ENCODE measurements at regions of chr1 and their contacts with region 1.

Region 1: DNA sequence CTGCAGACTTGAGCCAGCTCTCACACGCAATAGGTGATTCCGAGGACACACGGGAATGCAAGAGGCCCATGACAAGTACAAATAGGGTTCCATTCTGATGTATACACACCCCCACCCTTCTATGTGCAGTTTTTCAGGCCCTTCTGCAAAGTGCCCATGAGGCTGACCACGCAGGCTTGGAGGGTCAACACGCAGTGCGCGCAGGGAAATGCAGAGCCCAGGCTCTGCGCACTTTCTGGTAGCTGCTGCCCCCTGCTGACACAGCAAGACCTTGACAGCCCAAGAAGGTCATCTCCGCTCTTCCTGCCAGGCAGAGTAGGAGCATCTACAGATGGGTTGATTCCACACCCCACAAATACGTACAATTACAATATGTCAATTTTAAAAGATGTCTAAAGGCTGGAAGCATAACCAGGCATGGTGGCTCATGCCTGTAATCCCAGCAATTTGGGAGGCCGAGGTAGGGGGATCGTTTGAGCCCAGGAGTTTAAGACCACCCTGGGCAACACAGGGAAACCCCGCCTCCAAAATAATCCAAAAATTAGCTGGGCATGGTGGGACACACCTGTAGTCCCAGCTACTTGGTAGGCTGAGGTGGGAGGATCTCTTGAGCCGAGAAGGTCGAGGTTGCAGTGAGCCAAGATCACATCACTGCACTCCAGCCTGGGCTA is 18.5 kb downstream of the SH3BP5L start:
- DNase-seq: peak; percentile 50
- H3K4me3 Mint-ChIP-seq: no peak overlapping the region
- H3K27ac Mint-ChIP-seq: no peak overlapping the region
- H3K4me1 Mint-ChIP-seq: no peaks in the 10 kb centered on the region
- H3K27me3 Mint-ChIP-seq: no peaks in the 10 kb centered on the region
- CTCF ChIP-seq: peak; percentile 70

Region 2: GRCh38 chr1:248622570-248623001 is 184.6 kb before region 1 on chr1:
- CTCF ChIA-PET with region 1: no interaction called
- intact Hi-C with region 1: loop called (anchors 1 kb)
- DNase-seq: peak; percentile 21
- H3K4me3 Mint-ChIP-seq: no peak overlapping the region
- H3K27ac Mint-ChIP-seq: no peak overlapping the region
- H3K4me1 Mint-ChIP-seq: no peaks in the 10 kb centered on the region
- H3K27me3 Mint-ChIP-seq: no peaks in the 10 kb centered on the region
- CTCF ChIP-seq: no peak

Region 3: DNA sequence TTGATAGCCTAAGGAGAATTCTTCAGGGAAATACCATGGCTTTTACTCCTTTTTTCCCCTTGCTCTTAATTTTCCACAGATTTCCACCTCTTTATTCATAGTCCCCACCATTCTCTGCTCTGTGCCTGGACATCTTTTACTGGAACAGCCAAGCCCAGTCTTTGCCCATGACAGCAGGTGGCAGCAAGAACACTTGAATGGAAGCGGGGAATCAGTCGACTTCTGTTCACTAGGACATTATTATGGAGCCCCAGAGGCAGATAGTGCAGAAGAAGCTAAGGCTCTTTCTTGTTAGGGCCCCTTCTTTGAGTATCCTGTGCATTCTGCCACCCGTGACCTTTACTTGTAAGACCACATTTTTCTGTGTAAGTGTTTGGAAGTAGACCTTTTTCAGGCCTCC is 110.9 kb before region 1 on chr1:
- CTCF ChIA-PET with region 1: interaction called, 4 read pairs
- intact Hi-C with region 1: loop called (anchors 2 kb)
- DNase-seq: peak; percentile 43
- H3K4me3 Mint-ChIP-seq: no peak overlapping the region
- H3K27ac Mint-ChIP-seq: no peak overlapping the region
- H3K4me1 Mint-ChIP-seq: no peaks in the 10 kb centered on the region
- H3K27me3 Mint-ChIP-seq: no peaks in the 10 kb centered on the region
- CTCF ChIP-seq: no peak

Region 4: DNA sequence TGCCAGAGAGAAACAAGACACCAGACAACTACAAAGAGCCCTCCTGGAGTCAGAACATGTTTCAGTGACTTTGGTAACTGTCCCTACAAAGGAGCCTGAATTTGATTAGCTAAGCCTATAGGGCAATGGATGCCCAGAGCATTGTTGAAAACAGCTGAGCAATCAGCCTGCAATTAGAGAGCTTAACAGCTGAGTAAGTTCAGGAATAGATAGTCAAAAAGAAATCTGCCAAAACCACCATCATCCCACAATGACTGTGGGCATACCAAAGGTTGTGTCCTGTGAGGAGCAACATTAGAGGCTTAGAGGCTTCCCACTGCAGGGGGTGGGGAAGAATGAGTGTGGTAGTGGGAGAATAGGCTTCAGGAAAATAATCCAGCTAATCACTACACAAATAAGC is 13.6 kb before region 1 on chr1:
- CTCF ChIA-PET with region 1: no interaction called
- intact Hi-C with region 1: no loop called
- DNase-seq: no peak
- H3K4me3 Mint-ChIP-seq: no peak overlapping the region
- H3K27ac Mint-ChIP-seq: no peak overlapping the region
- H3K4me1 Mint-ChIP-seq: no peaks in the 10 kb centered on the region
- H3K27me3 Mint-ChIP-seq: no peaks in the 10 kb centered on the region
- CTCF ChIP-seq: no peak

Region 5: DNA sequence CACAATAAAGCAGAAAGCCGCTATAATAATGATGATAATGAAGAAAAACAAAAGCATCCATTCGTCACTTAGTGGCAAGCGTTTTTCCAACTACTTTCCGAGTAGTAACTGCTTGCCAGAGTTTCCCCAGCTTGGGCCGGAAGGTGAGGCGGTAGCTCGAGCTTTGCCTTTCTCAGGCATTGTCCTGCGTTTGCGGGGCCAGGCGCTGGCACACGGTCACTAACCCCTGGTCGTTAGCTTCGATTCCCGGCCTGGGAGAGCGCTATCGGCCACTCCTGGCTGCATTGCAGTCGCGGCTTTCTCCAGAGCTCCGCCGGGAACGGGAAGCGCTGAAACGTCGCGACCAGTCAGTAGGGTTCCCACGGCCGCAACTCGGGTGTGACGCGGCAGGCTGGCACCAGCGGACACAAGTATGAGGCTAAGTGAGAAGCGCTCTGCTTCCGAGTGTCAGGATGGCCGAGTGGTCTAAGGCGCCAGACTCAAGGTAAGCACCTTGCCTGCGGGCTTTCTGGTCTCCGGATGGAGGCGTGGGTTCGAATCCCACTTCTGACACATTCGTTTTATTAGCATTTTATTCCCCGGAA is 66.3 kb after region 1 on chr1:
- CTCF ChIA-PET with region 1: no interaction called
- intact Hi-C with region 1: no loop called
- DNase-seq: peak; percentile 98
- H3K4me3 Mint-ChIP-seq: peak overlapping the region; percentile 91
- H3K27ac Mint-ChIP-seq: peak overlapping the region; percentile 99
- H3K4me1 Mint-ChIP-seq: peaks cover 30% of the 10 kb centered on the region
- H3K27me3 Mint-ChIP-seq: peaks cover 16% of the 10 kb centered on the region
- CTCF ChIP-seq: no peak

Measured in Calu3 (cell line).